ENCODE measurements at regions of chr9 and their contacts with region 1.

Region 1: GRCh38 chr9:33374634-33375213 is 27.6 kb downstream of the AQP7 start:
- DNase-seq: peak; percentile 84
- H3K4me3 ChIP-seq: peak overlapping the region in 1 of 2 experiments; percentile 33; a peak in 1 of 4 replicates
- H3K27ac ChIP-seq: no peak overlapping the region
- H3K4me1 ChIP-seq: peaks cover 0 to 6% of the 10 kb centered on the region in 2 experiments; a peak in 1 of 4 replicates
- H3K27me3 ChIP-seq: no peaks in the 10 kb centered on the region
- CTCF ChIP-seq: peak; percentile 93
- EP300 ChIP-seq: no peak
- RAD21 ChIP-seq: peak; percentile 79

Region 2: DNA sequence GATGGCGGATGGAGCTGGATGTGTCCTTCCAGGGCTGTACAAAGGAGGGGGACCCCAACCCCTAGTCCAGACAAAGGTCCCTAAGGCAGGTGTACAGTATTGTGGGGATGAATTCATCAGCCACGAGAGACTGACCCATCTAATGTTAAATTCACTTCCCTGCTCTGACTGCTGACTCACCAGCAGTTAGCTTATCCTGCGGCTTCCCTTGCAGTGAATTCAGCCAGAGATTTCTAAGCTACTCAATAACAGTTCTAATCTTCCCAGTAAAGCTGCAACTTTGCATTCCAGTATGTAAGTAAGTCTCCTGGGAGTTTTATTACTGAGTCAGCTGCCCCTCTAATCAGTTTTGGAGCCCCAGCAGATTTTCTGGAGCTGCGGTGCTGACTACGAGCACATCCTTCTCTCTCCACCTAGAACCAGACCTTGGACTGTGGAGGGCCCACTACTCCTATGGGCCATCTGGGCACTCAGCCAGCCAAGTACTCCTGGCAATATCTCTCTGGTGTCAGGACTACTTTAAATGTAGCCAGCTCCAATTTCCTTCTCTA is 223.6 kb before region 1 on chr9:
- CTCF ChIA-PET with region 1: no interaction called
- POLR2A ChIA-PET with region 1: no interaction called
- DNase-seq: no peak
- H3K4me3 ChIP-seq: peak overlapping the region; percentile 13 to 27; a peak in 2 of 4 replicates
- H3K27ac ChIP-seq: peak overlapping the region; percentile 77 to 81
- H3K4me1 ChIP-seq: peaks cover 9 to 22% of the 10 kb centered on the region in 2 experiments; a peak in 2 of 4 replicates
- H3K27me3 ChIP-seq: no peaks in the 10 kb centered on the region
- CTCF ChIP-seq: no peak
- EP300 ChIP-seq: peak in 1 of 2 experiments; percentile 42; a peak in 1 of 4 replicates
- RAD21 ChIP-seq: no peak

Region 3: DNA sequence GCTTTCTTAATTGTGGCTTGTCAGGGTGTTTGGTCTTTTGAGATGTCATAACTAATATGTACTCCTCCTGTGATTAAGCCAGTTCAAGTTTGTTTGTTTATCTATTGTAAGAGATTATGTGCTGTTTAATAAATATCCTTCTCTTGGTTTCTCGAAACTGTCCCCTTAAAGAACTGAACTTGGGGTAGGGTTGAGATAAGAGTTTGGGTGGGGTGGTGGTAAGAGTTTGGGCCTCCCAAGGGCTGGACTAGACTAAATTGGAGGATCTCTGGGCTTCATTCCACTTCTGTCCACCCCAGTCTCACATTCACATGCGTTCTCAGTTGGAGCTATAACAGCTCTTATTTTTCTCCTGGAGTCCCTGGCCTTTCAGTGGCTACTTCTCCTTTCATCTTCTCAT is 10.6 kb before region 1 on chr9:
- CTCF ChIA-PET with region 1: interaction called, 18 read pairs
- POLR2A ChIA-PET with region 1: no interaction called
- DNase-seq: no peak
- H3K4me3 ChIP-seq: no peak overlapping the region
- H3K27ac ChIP-seq: no peak overlapping the region
- H3K4me1 ChIP-seq: no peaks in the 10 kb centered on the region
- H3K27me3 ChIP-seq: no peaks in the 10 kb centered on the region
- CTCF ChIP-seq: no peak
- EP300 ChIP-seq: no peak
- RAD21 ChIP-seq: no peak

Region 4: DNA sequence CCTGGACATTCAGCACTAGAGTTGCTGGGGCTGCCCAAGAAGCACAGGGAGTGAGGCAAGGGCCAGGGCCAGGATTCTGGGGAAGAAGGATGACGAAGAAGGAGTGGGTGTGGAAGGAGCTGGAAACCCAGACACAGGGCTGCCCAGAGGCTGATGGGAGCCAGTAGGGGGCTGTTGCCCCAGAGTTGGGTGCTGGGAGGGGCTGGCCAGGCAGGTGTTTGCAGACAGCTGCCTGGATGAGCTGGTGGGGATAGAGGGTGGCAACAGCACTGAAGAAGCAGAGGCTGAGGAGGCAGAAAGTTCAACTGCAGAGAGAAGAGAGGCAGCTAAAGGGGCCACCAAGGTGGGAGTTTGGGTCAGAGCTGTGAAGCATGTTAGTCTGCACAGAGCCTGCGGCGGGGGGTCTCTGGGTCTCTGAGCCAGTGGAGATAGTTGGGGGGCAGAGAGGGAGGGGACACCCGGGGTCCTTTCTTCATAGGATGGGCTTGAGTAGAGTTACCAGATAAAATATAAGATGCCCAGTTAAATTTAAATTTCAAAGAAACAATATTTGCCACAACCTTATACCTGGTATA is 30.2 kb after region 1 on chr9:
- CTCF ChIA-PET with region 1: interaction called, 15 read pairs
- POLR2A ChIA-PET with region 1: no interaction called
- DNase-seq: no peak
- H3K4me3 ChIP-seq: no peak overlapping the region
- H3K27ac ChIP-seq: no peak overlapping the region
- H3K4me1 ChIP-seq: no peaks in the 10 kb centered on the region
- H3K27me3 ChIP-seq: no peaks in the 10 kb centered on the region
- CTCF ChIP-seq: no peak
- EP300 ChIP-seq: no peak
- RAD21 ChIP-seq: no peak

Region 5: DNA sequence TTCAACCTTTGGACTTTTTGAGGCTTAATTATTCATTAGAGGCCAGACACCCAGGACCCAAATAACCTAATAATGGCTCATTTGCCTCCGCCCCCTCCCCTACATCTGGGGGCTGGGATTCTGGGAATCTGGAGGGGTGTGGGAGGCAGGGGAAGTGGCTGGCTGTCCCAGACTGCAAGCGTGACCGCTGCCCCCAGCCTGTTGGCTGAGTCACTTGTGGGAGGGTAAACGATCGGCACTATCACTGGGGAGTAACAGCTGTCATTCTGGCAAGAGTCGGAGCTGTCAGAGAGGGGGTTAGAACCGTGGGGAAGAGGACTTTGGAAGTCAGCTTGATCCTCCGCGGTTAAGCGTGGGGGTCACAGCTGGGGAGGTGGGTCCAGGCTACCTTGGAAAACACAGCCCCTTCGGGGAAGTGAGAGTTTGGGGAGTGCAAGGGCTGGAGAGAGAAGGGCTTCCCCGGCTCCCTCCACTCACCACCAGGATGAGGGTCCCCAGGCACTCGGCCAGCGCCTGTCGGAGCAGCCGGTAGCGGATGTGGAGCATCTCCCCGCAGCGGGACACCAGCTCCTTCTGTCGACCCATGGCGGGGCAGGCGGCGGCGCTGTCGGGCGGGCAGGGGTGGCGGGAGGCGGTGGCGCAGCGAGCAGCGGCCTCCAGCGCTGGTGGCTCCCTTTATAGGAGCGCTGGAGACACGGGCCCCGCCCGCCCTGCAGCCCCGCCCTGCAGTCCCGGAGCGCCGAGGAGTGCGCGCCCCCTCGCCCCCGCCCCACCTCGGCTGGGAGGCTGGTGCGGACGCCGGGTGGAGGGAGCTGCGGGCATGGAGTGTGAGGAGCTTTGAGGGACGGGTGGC is 72.4 kb after region 1 on chr9 and contains the start of gene AQP3:
- CTCF ChIA-PET with region 1: interaction called, 27 read pairs
- POLR2A ChIA-PET with region 1: no interaction called
- DNase-seq: peak; percentile 88
- H3K4me3 ChIP-seq: peak within 1 kb of the TSS; percentile 37 to 48
- H3K27ac ChIP-seq: no peak within 1 kb of the TSS
- H3K4me1 ChIP-seq: peaks cover 0 to 17% of the 10 kb centered on the region in 2 experiments; a peak in 1 of 4 replicates
- H3K27me3 ChIP-seq: no peaks in the 10 kb centered on the region; the same call in 1 of the 2 replicates
- CTCF ChIP-seq: peak; percentile 15; the same call in 1 of the 2 replicates
- EP300 ChIP-seq: no peak
- RAD21 ChIP-seq: 0 out of 2 replicates have a peak, but pooled peaks have one; percentile 6
- polyA plus RNA-seq, gene AQP3: 0.52 and 0.64 TPM in 2 replicates

Region 6: GRCh38 chr9:33466565-33467495 is 92.1 kb after region 1 on chr9:
- CTCF ChIA-PET with region 1: interaction called, 103 read pairs
- POLR2A ChIA-PET with region 1: no interaction called
- DNase-seq: peak; percentile 86
- H3K4me3 ChIP-seq: peak overlapping the region in 1 of 2 experiments; percentile 14; a peak in 1 of 4 replicates
- H3K27ac ChIP-seq: no peak overlapping the region
- H3K4me1 ChIP-seq: no peaks in the 10 kb centered on the region; a peak in 1 of 4 replicates
- H3K27me3 ChIP-seq: no peaks in the 10 kb centered on the region
- CTCF ChIP-seq: peak; percentile 90
- EP300 ChIP-seq: no peak
- RAD21 ChIP-seq: peak; percentile 75